ENCODE measurements at regions of chr12 and their contacts with region 1.

Region 1: GRCh38 chr12:50084775-50085614 is at the start of gene SMARCD1:
- DNase-seq: peak; percentile 96
- ATAC-seq: peak; percentile 96
- total RNA-seq, gene SMARCD1: 14.3 TPM

Region 2: GRCh38 chr12:50050410-50051098 is 34.4 kb before region 1 on chr12:
- intact Hi-C with region 1: no loop called
- DNase-seq: peak; percentile 86
- ATAC-seq: peak; percentile 88

Region 3: DNA sequence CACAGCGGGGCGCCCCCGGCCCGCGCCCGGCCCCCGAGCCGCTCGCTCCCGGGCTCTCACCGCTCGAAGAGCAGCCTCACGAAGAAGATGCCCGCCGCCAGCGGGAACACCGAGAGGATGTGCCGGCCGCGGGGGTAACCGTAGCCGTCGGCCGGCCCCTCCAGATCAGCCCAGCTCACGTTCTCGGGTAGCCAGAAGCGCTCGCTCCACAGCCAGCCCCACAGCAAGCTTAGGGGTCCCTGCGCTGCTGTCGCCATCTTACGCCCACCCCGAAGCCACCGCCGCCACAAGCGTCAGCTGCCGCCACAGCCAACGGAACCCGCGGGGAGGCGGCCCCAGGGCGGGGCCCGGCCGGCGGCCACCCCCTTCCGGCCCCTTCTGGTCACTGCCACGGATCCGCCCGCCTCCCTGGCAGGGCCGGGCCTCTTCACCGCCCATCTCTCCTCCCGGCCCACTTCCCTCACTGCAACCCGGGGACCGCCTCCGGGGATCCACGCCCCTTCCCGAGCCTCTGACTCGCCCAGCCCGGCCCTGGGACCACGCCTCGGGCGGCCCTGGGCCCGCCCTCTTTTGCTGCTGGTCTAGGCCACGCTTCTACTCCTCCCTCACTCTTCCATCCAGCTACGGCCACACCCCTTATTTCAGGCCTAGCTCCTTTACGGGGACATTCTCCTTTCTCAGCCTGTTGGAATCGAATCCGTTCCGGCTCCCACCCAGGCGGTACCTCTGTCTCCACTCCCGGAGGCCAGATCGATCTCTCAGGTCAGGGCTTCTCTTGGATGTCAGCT is 82.2 kb after region 1 on chr12 and contains the start of gene CERS5:
- intact Hi-C with region 1: loop called (anchors 5 kb)
- DNase-seq: peak; percentile 99
- ATAC-seq: peak; percentile 99
- total RNA-seq, gene CERS5: 7.3 TPM